A673 (cell line): ENCODE measurements at regions of chr1 and their contacts with region 1.

Region 1: GRCh38 chr1:68442822-68443556 is 6.8 kb downstream of the RPE65 start:
- DNase-seq: peak; percentile 79
- H3K4me3 ChIP-seq: no peak overlapping the region
- H3K27ac ChIP-seq: no peak overlapping the region
- H3K4me1 ChIP-seq: peaks cover 3% of the 10 kb centered on the region
- H3K27me3 ChIP-seq: no peaks in the 10 kb centered on the region
- CTCF ChIP-seq: peak; percentile 82

Region 2: DNA sequence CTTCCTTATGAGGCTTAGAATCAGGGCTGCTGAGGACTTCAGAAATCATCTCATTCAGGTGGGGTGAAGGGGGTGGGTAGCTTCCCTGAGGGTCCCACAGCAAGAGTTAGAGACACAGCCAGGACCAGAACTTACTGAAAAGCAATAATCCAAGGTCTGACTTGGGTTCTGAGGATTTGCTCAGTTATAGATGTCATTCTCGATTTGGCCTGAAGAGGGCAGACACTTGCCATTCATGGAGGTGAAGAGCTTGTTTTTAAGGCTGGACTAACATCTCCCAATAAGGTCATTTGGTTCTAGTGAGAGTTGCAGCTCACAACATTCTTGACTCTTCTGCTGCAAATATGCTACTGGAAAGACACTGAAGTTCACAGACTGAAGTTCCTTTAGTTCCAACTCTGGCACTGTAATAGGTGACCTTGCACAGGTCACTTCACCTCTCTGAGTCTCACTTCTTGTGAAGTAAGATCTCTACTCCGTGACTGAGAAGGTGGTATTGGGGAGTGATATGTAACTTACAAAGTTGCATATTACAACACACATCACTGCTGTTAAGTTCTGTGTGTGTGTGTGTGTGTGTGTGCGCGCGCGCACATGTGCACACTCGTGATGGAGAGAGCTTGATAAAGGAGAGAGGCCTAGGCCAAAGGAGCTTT is 322.7 kb before region 1 on chr1:
- CTCF ChIA-PET with region 1: interaction called, 11 read pairs
- POLR2A ChIA-PET with region 1: no interaction called
- intact Hi-C with region 1: loop called (anchors 2 kb)
- DNase-seq: peak; percentile 75
- H3K4me3 ChIP-seq: no peak overlapping the region
- H3K27ac ChIP-seq: no peak overlapping the region
- H3K4me1 ChIP-seq: peaks cover 3% of the 10 kb centered on the region
- H3K27me3 ChIP-seq: no peaks in the 10 kb centered on the region
- CTCF ChIP-seq: peak; percentile 78